K562 (cell line): ENCODE measurements at regions of chr12 and their contacts with region 1.

Region 1: GRCh38 chr12:109804820-109805761 is 28.1 kb downstream of the TRPV4 start:
- DNase-seq: peak; percentile 63 to 90 (median 87)
- ATAC-seq: peak; percentile 95
- H3K4me3 ChIP-seq: no peak overlapping the region
- H3K27ac ChIP-seq: no peak overlapping the region
- H3K4me1 ChIP-seq: no peaks in the 10 kb centered on the region; a peak in 1 of 5 replicates
- H3K27me3 ChIP-seq: peaks cover 4 to 24% of the 10 kb centered on the region in 2 experiments; a peak in 3 of 5 replicates
- CTCF ChIP-seq: peak; percentile 90 to 96 (median 90)
- EP300 ChIP-seq: no peak
- POLR2A ChIP-seq: no peak
- RAD21 ChIP-seq: peak; percentile 68 to 86

Region 2: DNA sequence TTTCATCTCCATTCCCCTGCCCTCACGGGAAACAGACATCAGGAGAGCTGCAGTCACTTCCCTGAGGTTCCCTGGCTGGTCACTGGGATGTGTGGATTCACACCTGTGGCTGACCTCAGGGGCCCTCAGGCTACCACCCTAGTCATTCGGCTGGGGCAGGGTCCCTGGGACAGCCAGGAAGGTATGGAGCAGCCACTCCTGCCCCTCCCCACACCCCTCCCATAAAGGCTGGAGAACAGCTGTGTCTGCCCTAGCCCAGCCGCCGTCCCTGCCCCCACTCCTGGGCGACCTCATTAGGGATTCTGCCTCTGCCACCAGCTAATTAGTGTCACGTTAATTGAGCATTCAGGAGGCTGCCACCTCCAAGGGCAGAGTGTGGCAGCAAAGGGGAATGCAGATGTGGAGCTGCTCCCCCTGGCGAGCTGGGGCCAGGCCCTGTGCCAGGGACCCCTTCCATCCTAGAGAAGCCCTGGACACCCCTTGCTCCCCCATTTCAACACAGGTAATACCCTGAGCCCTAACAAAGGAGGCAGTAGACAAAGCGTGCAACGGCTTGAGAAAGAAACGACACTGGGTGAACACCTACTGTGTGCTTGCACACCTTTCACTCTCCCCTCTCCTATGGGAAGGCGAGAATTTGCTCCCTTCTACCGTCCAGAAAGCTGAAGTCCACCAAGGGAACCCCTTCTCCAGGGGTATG is 46.6 kb before region 1 on chr12:
- CTCF ChIA-PET with region 1: no interaction called
- POLR2A ChIA-PET with region 1: no interaction called
- in situ Hi-C with region 1: no loop called
- intact Hi-C with region 1: no loop called
- DNase-seq: no peak
- ATAC-seq: no peak
- H3K4me3 ChIP-seq: no peak overlapping the region
- H3K27ac ChIP-seq: no peak overlapping the region
- H3K4me1 ChIP-seq: no peaks in the 10 kb centered on the region; a peak in 1 of 5 replicates
- H3K27me3 ChIP-seq: peaks cover 12 to 45% of the 10 kb centered on the region in 2 experiments; a peak in 3 of 5 replicates
- CTCF ChIP-seq: no peak
- EP300 ChIP-seq: no peak
- POLR2A ChIP-seq: no peak
- RAD21 ChIP-seq: no peak

Region 3: GRCh38 chr12:109844983-109845823 is 40.1 kb after region 1 on chr12:
- CTCF ChIA-PET with region 1: interaction called, 14 read pairs
- POLR2A ChIA-PET with region 1: interaction called, 3 read pairs
- in situ Hi-C with region 1: no loop called
- intact Hi-C with region 1: loop called (anchors 1 kb)
- DNase-seq: peak; percentile 88 to 98 (median 96)
- ATAC-seq: peak; percentile 99
- H3K4me3 ChIP-seq: no peak overlapping the region
- H3K27ac ChIP-seq: no peak overlapping the region
- H3K4me1 ChIP-seq: peaks cover 0 to 5% of the 10 kb centered on the region in 2 experiments; a peak in 3 of 5 replicates
- H3K27me3 ChIP-seq: peaks cover 0 to 2% of the 10 kb centered on the region in 2 experiments; a peak in 2 of 5 replicates
- CTCF ChIP-seq: peak; percentile 95 to 97 (median 96)
- EP300 ChIP-seq: no peak
- POLR2A ChIP-seq: no peak
- RAD21 ChIP-seq: peak; percentile 58 to 81

Region 4: GRCh38 chr12:109863847-109864712 is 59.0 kb after region 1 on chr12:
- CTCF ChIA-PET with region 1: no interaction called
- POLR2A ChIA-PET with region 1: no interaction called
- in situ Hi-C with region 1: no loop called
- intact Hi-C with region 1: no loop called
- DNase-seq: no peak
- ATAC-seq: peak; percentile 54
- H3K4me3 ChIP-seq: no peak overlapping the region
- H3K27ac ChIP-seq: no peak overlapping the region
- H3K4me1 ChIP-seq: no peaks in the 10 kb centered on the region; a peak in 2 of 5 replicates
- H3K27me3 ChIP-seq: peaks cover 0 to 14% of the 10 kb centered on the region in 2 experiments; a peak in 2 of 5 replicates
- CTCF ChIP-seq: no peak
- EP300 ChIP-seq: no peak
- POLR2A ChIP-seq: no peak
- RAD21 ChIP-seq: no peak

Region 5: GRCh38 chr12:110983806-110984205 is 1178.7 kb after region 1 on chr12:
- CTCF ChIA-PET with region 1: no interaction called
- POLR2A ChIA-PET with region 1: no interaction called
- in situ Hi-C with region 1: no loop called
- intact Hi-C with region 1: no loop called
- DNase-seq: no peak
- ATAC-seq: no peak
- H3K4me3 ChIP-seq: no peak overlapping the region
- H3K27ac ChIP-seq: no peak overlapping the region
- H3K4me1 ChIP-seq: no peaks in the 10 kb centered on the region
- H3K27me3 ChIP-seq: peaks cover 3 to 9% of the 10 kb centered on the region in 2 experiments; a peak in 4 of 5 replicates
- CTCF ChIP-seq: no peak
- EP300 ChIP-seq: no peak
- POLR2A ChIP-seq: no peak
- RAD21 ChIP-seq: no peak